Activated CD4-positive, alpha-beta T cell treated with anti-CD3 and anti-CD28 coated beads, Interleukin-2, amount 10 ng/mL, durations not matched to agents 24 days and 14 days (primary cell): ENCODE measurements at regions of chr2 and their contacts with region 1.

Region 1: GRCh38 chr2:27086090-27086723 is 365 bp upstream of the KHK start:
- DNase-seq: peak; percentile 100
- H3K4me3 Mint-ChIP-seq: peak overlapping the region; percentile 90
- H3K27ac Mint-ChIP-seq: peak overlapping the region; percentile 91
- H3K4me1 Mint-ChIP-seq: peaks cover 30% of the 10 kb centered on the region
- H3K27me3 Mint-ChIP-seq: no peaks in the 10 kb centered on the region

Region 2: GRCh38 chr2:26964446-26965130 is 121.6 kb before region 1 on chr2:
- intact Hi-C with region 1: loop called (anchors 5 kb)
- DNase-seq: no peak
- H3K4me3 Mint-ChIP-seq: no peak overlapping the region
- H3K27ac Mint-ChIP-seq: no peak overlapping the region
- H3K4me1 Mint-ChIP-seq: peaks cover 7% of the 10 kb centered on the region
- H3K27me3 Mint-ChIP-seq: peaks cover 30% of the 10 kb centered on the region

Region 3: GRCh38 chr2:27050281-27050995 is 35.8 kb before region 1 on chr2:
- intact Hi-C with region 1: loop called (anchors 1 kb)
- DNase-seq: peak; percentile 98
- H3K4me3 Mint-ChIP-seq: peak overlapping the region; percentile 90
- H3K27ac Mint-ChIP-seq: peak overlapping the region; percentile 99
- H3K4me1 Mint-ChIP-seq: peaks cover 22% of the 10 kb centered on the region
- H3K27me3 Mint-ChIP-seq: peaks cover 5% of the 10 kb centered on the region

Region 4: GRCh38 chr2:27071277-27071989 is 14.8 kb before region 1 on chr2 and contains the start of gene OST4:
- intact Hi-C with region 1: loop called (anchors 1 kb)
- DNase-seq: peak; percentile 98
- H3K4me3 Mint-ChIP-seq: peak within 1 kb of the TSS; percentile 99
- H3K27ac Mint-ChIP-seq: peak within 1 kb of the TSS; percentile 93
- H3K4me1 Mint-ChIP-seq: peaks cover 58% of the 10 kb centered on the region
- H3K27me3 Mint-ChIP-seq: no peaks in the 10 kb centered on the region
- total RNA-seq, gene OST4: 314 and 326 TPM in 2 replicates

Region 5: GRCh38 chr2:27133905-27134780 is 47.9 kb after region 1 on chr2 and contains the start of gene PREB:
- intact Hi-C with region 1: loop called (anchors 1 kb)
- DNase-seq: peak; percentile 100
- H3K4me3 Mint-ChIP-seq: peak within 1 kb of the TSS; percentile 93
- H3K27ac Mint-ChIP-seq: peak within 1 kb of the TSS; percentile 98
- H3K4me1 Mint-ChIP-seq: peaks cover 16% of the 10 kb centered on the region
- H3K27me3 Mint-ChIP-seq: no peaks in the 10 kb centered on the region
- total RNA-seq, gene PREB: 85.4 and 88.3 TPM in 2 replicates

Region 6: DNA sequence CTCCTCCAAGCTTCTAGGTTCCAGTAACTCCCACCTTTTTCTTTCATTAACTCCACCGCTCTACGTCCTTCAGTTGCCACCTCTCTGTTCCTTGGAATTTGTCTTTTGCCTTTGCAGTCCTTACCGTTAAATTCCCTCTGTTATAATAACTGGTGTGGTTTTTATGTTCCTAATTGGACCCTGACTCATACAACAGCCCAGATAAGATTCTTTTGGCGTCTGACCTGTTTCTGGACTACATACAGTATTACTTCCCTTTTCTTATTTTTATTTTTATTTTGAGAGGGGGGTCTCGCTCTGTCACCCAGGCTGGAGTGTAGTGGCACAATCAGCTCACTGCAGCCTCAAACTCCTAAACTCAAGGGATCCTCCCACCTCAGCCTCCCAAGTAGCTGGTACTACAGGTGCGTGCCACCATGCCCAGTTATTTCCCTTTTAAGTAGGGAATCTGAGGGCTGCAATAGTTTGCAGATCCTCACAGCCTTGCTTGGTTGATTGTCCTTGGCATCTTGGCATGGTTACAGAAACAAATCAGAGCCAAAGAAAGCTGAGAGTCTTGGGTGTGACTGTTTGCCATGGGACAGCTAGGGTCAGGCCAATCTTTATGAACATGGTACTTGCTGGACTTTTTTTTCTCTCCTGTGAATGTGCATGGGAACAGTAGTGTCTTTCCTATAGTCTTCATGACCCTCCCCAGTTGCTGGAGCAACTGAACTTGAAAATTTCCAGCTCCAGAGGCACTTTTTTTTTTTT is 84.5 kb after region 1 on chr2:
- intact Hi-C with region 1: no loop called
- DNase-seq: no peak
- H3K4me3 Mint-ChIP-seq: no peak overlapping the region
- H3K27ac Mint-ChIP-seq: no peak overlapping the region
- H3K4me1 Mint-ChIP-seq: peaks cover 2% of the 10 kb centered on the region
- H3K27me3 Mint-ChIP-seq: peaks cover 19% of the 10 kb centered on the region

Region 7: DNA sequence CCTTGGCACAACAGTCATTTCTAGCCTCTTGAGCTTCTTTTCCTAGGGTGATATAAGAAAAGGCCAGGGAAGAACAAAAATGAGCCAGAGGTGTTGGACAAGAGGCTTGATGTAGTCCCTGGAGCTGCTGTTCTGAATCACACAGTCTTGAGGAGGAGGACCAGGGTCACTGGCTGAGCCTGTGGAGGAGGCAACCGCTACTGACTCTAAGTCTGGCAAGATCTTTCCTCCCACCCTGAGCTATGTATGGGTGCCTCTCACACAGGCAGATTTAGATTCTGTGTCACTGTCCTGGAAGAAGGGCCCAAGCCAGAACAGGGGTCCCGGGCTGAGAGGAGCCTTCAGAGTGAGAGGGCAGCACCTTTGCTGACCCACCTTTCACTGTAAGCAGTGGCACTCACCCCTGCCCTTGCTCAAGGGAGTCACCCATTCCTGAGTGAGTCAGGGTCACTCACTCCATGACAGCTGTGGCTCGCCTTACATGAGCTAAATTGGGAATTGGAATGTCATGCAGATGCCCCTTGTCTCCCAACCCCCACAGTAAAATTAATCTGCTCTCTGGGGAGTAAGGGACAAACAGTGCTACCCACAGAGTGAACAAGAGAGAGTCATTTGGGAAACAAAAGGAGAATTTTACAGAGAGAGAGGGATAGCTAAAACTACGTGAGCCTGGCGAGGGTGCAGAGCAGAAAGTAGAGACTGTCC is 195.8 kb after region 1 on chr2 and contains the start of gene TRIM54:
- intact Hi-C with region 1: no loop called
- DNase-seq: no peak
- H3K4me3 Mint-ChIP-seq: no peak within 1 kb of the TSS
- H3K27ac Mint-ChIP-seq: no peak within 1 kb of the TSS
- H3K4me1 Mint-ChIP-seq: peaks cover 4% of the 10 kb centered on the region
- H3K27me3 Mint-ChIP-seq: peaks cover 26% of the 10 kb centered on the region
- total RNA-seq, gene TRIM54: 0.33 and 0.47 TPM in 2 replicates